ENCODE measurements at regions of chrX and their contacts with region 1.

Region 1: DNA sequence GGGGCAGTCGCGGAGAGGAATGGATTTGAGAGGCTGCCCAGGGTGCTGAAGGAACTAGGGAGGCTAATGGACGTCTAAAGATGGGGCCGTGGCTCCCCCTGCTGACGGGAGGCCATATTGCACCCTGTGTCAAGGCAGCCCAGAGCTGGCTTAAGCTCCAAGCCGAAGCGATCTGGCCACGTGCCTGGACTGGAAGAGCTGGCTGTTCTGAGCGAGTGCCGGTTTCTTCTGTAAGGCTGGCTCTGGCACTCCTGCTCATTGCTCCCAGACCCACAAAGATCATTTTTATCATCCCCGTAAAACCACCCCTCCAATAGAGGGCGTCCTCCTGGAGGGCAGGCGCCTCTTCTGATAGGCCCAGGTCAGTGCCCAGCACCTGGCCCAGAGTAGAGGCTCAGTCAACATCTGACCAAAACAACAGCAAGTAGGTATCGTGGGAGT is 5.6 kb downstream of the PNCK start:
- DNase-seq: peak; percentile 79
- ATAC-seq: peak; percentile 92
- H3K4me3 ChIP-seq: no peak overlapping the region
- H3K4me3 Mint-ChIP-seq: peak overlapping the region; percentile 70
- H3K27ac ChIP-seq: no peak overlapping the region
- H3K27ac Mint-ChIP-seq: no peak overlapping the region
- H3K4me1 ChIP-seq: peaks cover 0 to 6% of the 10 kb centered on the region in 2 donors
- H3K4me1 Mint-ChIP-seq: peaks cover 8% of the 10 kb centered on the region
- H3K27me3 ChIP-seq: peaks cover 0 to 11% (median 0%) of the 10 kb centered on the region in 4 experiments
- H3K27me3 Mint-ChIP-seq: peaks cover 22% of the 10 kb centered on the region
- CTCF ChIP-seq: peak; percentile 71

Region 2: DNA sequence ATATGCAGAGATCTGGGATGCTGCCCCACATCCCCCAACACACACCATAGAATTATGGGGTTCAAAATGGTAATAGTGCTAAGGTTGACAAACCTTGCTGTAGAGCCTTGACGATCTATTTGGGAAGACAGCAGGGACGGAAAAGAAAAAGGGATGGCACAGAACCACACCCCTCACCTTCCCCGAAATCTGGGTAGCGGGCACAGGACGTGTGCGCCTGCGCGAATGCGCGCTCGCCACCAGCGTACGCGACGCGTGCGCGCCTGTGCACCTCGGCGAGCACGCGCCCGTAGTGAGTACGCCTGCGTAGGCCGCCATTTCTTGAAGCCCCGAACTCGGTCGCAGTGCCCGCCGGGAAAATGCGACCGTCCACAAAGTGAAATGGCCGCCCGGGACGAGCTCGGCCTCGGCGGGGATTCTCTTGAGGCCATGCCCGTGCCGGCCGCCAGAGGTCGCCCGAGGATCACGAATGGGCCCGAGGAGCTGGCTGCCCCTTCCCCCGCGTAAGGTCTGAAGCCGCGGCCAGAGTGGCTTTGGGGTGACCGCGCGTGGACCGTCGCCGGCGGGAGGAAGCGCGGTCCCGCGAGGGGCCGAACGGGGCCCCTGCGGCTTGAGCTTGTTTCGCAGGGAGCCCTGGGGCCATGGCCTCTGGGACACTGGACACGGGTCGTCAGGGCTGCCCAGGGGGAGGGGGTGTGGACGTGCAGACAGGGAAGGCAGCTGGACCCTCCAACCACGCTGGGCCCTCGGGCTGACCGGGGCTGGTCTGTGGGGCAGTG is 726.5 kb before region 1 on chrX:
- CTCF ChIA-PET with region 1: interaction called, 31 read pairs
- POLR2A ChIA-PET with region 1: no interaction called
- intact Hi-C with region 1: loop called (anchors 2 kb)
- DNase-seq: peak; percentile 93
- ATAC-seq: peak; percentile 93
- H3K4me3 ChIP-seq: peak overlapping the region; percentile 36 to 70 (median 53)
- H3K4me3 Mint-ChIP-seq: peak overlapping the region; percentile 91
- H3K27ac ChIP-seq: peak overlapping the region; percentile 67 to 76
- H3K27ac Mint-ChIP-seq: peak overlapping the region; percentile 91
- H3K4me1 ChIP-seq: peaks cover 5 to 12% of the 10 kb centered on the region in 2 donors
- H3K4me1 Mint-ChIP-seq: peaks cover 9% of the 10 kb centered on the region
- H3K27me3 ChIP-seq: no peaks in the 10 kb centered on the region
- H3K27me3 Mint-ChIP-seq: no peaks in the 10 kb centered on the region
- CTCF ChIP-seq: peak; percentile 81

Region 3: DNA sequence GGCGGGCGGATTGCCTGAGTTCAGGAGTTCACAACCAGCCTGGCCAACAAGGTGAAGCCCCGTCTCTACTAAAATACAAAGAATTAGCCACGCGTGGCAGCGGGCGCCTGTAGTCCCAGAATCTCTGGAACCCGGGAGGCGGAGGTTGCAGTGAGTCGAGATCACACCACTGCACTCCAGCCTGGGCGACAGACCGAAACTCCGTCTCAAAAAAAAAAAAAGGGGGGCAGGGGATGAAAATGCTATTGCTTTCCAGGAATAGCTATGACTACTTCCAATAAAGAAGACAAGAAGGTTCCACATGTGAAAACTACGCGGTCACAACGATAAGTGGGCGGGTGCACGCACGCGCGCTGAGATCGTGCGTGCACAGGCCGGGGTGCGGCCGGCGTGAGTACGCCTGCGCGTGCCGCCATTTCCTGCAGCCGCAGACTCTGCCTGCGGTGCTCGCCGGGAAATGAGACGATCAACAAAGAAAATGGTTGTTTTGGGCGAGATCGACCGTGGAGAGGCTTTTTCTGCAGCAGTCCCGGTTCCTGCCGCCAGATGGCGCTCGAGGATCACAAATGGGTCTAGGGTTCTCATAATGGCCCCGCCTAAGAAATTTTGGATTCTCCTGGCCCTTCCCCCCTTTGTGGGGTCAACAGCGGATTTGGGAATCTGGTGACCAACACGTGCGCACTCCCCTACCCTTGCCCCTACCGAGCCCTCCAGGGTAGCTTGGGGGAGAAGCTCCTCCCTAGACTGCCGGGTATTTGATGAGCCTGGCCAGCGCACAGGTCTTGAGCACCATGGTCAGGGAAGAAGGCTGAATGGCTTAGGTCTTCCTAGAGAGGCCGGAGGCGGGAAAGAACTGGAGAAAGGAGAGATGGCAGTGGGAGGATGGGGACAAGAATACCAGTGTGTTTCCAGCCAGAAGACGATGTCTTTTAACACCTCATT is 709.2 kb before region 1 on chrX:
- CTCF ChIA-PET with region 1: interaction called, 6 read pairs
- POLR2A ChIA-PET with region 1: interaction called, 3 read pairs
- intact Hi-C with region 1: loop called (anchors 1 kb)
- DNase-seq: peak; percentile 93
- ATAC-seq: peak; percentile 97
- H3K4me3 ChIP-seq: peak overlapping the region in 4 of 5 experiments; percentile 31 to 46 (median 36)
- H3K4me3 Mint-ChIP-seq: peak overlapping the region; percentile 87
- H3K27ac ChIP-seq: peak overlapping the region; percentile 70 to 75
- H3K27ac Mint-ChIP-seq: peak overlapping the region; percentile 96
- H3K4me1 ChIP-seq: peaks cover 5 to 15% of the 10 kb centered on the region in 2 donors
- H3K4me1 Mint-ChIP-seq: peaks cover 8% of the 10 kb centered on the region
- H3K27me3 ChIP-seq: no peaks in the 10 kb centered on the region
- H3K27me3 Mint-ChIP-seq: no peaks in the 10 kb centered on the region
- CTCF ChIP-seq: peak; percentile 77

Region 4: GRCh38 chrX:153032397-153033118 is 635.4 kb before region 1 on chrX:
- CTCF ChIA-PET with region 1: interaction called, 20 read pairs
- POLR2A ChIA-PET with region 1: no interaction called
- intact Hi-C with region 1: no loop called
- DNase-seq: peak; percentile 72
- ATAC-seq: peak; percentile 84
- H3K4me3 ChIP-seq: peak overlapping the region in 4 of 5 experiments; percentile 40 to 67 (median 56)
- H3K4me3 Mint-ChIP-seq: peak overlapping the region; percentile 93
- H3K27ac ChIP-seq: peak overlapping the region; percentile 47 to 58
- H3K27ac Mint-ChIP-seq: peak overlapping the region; percentile 96
- H3K4me1 ChIP-seq: peaks cover 0 to 13% of the 10 kb centered on the region in 2 donors
- H3K4me1 Mint-ChIP-seq: peaks cover 11% of the 10 kb centered on the region
- H3K27me3 ChIP-seq: no peaks in the 10 kb centered on the region
- H3K27me3 Mint-ChIP-seq: no peaks in the 10 kb centered on the region
- CTCF ChIP-seq: peak; percentile 81

Region 5: GRCh38 chrX:153539171-153539978 is 128.6 kb before region 1 on chrX:
- CTCF ChIA-PET with region 1: interaction called, 95 read pairs
- POLR2A ChIA-PET with region 1: interaction called, 7 read pairs
- intact Hi-C with region 1: loop called (anchors 1 kb)
- DNase-seq: peak; percentile 68
- ATAC-seq: peak; percentile 93
- H3K4me3 ChIP-seq: no peak overlapping the region
- H3K4me3 Mint-ChIP-seq: no peak overlapping the region
- H3K27ac ChIP-seq: no peak overlapping the region
- H3K27ac Mint-ChIP-seq: no peak overlapping the region
- H3K4me1 ChIP-seq: peaks cover 0 to 3% of the 10 kb centered on the region in 2 donors
- H3K4me1 Mint-ChIP-seq: no peaks in the 10 kb centered on the region
- H3K27me3 ChIP-seq: no peaks in the 10 kb centered on the region
- H3K27me3 Mint-ChIP-seq: peaks cover 3% of the 10 kb centered on the region
- CTCF ChIP-seq: peak; percentile 76

Region 6: DNA sequence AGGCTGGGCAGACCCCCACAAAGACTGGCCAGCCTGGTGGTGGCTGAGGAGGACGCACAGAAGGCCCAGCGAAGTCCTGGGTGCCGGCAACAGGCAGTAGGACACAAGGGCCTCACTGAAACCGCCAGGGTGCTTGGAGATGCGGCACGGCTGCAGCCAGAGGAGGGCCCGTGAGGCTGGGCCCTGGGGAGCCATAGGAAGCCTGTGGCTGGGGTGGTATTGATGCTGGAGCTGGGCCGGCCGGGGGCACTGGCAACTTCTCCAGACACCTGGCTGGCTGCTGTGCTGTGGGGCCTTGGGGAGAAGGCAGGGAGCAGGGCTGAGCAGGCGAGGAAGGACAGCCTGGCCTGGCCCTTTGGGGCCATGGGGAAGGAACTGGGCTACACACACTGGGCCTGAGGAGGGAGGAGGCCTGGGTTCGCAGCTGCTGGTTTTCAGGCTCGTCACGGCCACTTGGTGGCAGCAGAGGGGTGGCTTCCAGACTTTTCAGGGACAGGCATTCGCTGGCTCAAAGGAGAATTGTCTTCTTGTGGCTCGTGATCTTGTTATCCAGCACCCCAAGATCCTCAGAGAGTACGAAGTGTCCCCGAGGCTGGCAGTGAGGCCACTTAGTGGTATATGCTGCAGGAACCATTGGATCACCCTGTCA is 113.3 kb before region 1 on chrX:
- CTCF ChIA-PET with region 1: interaction called, 97 read pairs
- POLR2A ChIA-PET with region 1: no interaction called
- intact Hi-C with region 1: loop called (anchors 2 kb)
- DNase-seq: peak; percentile 72
- ATAC-seq: peak; percentile 73
- H3K4me3 ChIP-seq: no peak overlapping the region
- H3K4me3 Mint-ChIP-seq: no peak overlapping the region
- H3K27ac ChIP-seq: no peak overlapping the region
- H3K27ac Mint-ChIP-seq: no peak overlapping the region
- H3K4me1 ChIP-seq: no peaks in the 10 kb centered on the region
- H3K4me1 Mint-ChIP-seq: no peaks in the 10 kb centered on the region
- H3K27me3 ChIP-seq: no peaks in the 10 kb centered on the region
- H3K27me3 Mint-ChIP-seq: no peaks in the 10 kb centered on the region
- CTCF ChIP-seq: peak; percentile 66

Region 7: DNA sequence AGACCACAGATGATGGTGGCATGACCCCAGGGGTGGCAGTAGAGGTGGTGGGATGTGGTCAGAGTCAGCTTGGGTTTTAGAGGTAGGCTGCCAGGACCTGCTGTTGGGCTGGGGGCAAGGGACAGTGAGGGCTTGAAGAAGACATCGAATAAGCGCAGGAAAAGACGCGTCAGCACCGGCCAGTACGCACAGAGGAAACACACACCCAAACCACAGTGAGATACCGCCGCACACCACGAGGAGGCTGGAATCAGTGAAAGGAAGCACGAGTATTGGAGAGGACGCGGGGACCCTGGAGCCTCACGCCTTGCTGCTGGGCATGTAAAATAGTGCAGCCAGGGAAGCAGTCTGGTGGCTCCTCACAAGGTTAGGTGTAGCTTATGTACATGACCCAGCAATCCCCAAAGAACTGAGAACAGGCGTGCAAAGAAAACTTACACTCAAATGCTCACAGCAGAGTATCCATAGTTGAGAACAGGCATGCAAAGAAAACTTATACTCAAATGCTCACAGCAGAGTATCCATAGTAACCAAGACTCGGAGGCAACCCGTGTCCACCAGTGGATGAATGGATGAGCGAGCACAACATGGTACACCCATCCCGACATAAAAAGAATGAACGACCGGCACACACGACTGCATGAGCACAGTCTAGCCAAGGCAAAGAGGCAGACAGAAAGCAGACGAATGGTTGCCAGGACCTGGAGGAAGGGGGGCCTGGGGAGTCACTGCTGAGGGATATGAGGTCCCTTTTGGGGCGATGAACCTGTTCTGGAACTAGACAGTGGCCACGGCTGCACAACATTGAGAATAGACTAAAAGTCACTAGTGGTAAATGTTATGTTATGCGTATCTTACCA is 149.1 kb after region 1 on chrX:
- CTCF ChIA-PET with region 1: no interaction called
- POLR2A ChIA-PET with region 1: no interaction called
- intact Hi-C with region 1: no loop called
- DNase-seq: no peak
- ATAC-seq: no peak
- H3K4me3 ChIP-seq: no peak overlapping the region
- H3K4me3 Mint-ChIP-seq: no peak overlapping the region
- H3K27ac ChIP-seq: no peak overlapping the region
- H3K27ac Mint-ChIP-seq: no peak overlapping the region
- H3K4me1 ChIP-seq: peaks cover 4 to 23% of the 10 kb centered on the region in 2 donors
- H3K4me1 Mint-ChIP-seq: peaks cover 13% of the 10 kb centered on the region
- H3K27me3 ChIP-seq: peaks cover 0 to 35% (median 4%) of the 10 kb centered on the region in 4 experiments
- H3K27me3 Mint-ChIP-seq: peaks cover 18% of the 10 kb centered on the region
- CTCF ChIP-seq: peak; percentile 9

Region 8: GRCh38 chrX:154967603-154968002 is 1299.6 kb after region 1 on chrX:
- CTCF ChIA-PET with region 1: no interaction called
- POLR2A ChIA-PET with region 1: no interaction called
- intact Hi-C with region 1: no loop called
- DNase-seq: no peak
- ATAC-seq: no peak
- H3K4me3 ChIP-seq: no peak overlapping the region
- H3K4me3 Mint-ChIP-seq: no peak overlapping the region
- H3K27ac ChIP-seq: no peak overlapping the region
- H3K27ac Mint-ChIP-seq: no peak overlapping the region
- H3K4me1 ChIP-seq: no peaks in the 10 kb centered on the region
- H3K4me1 Mint-ChIP-seq: no peaks in the 10 kb centered on the region
- H3K27me3 ChIP-seq: no peaks in the 10 kb centered on the region
- H3K27me3 Mint-ChIP-seq: no peaks in the 10 kb centered on the region
- CTCF ChIP-seq: no peak